H1 (cell line): ENCODE measurements at regions of chr2 and their contacts with region 1.

Region 1: DNA sequence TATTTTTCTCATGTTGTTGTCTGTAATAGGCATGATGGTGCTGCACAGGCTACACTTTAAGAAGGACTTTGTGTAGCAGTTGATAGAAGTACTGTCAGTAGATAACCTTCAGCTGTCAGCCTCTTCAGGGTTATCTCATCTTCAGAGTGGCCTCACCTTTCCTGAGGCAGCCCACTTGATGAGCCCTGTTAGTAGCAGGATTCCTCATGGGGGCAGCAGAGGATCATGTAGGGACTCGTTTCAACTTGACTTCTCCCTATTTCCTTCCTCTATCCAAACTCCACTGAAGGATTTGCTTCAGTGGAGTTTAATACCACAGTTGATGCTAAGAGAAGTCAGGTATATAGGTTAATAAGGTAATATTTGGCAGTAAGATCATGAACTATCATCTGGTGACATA is 530.3 kb upstream of the FSIP2 start:
- DNase-seq: peak; percentile 23 to 65
- H3K4me3 ChIP-seq: no peak overlapping the region
- H3K27ac ChIP-seq: no peak overlapping the region
- H3K4me1 ChIP-seq: no peaks in the 10 kb centered on the region
- H3K27me3 ChIP-seq: no peaks in the 10 kb centered on the region
- CTCF ChIP-seq: peak; percentile 58 to 84 (median 75)
- EP300 ChIP-seq: no peak
- POLR2A ChIP-seq: no peak
- RAD21 ChIP-seq: peak; percentile 96

Region 2: GRCh38 chr2:185279999-185280398 is 71.7 kb after region 1 on chr2:
- CTCF ChIA-PET with region 1: interaction called, 12 read pairs
- POLR2A ChIA-PET with region 1: no interaction called
- DNase-seq: no peak
- H3K4me3 ChIP-seq: no peak overlapping the region
- H3K27ac ChIP-seq: no peak overlapping the region
- H3K4me1 ChIP-seq: no peaks in the 10 kb centered on the region
- H3K27me3 ChIP-seq: no peaks in the 10 kb centered on the region
- CTCF ChIP-seq: peak in 2 of 3 experiments; percentile 18 to 31; a peak in 2 of 4 replicates
- EP300 ChIP-seq: no peak
- POLR2A ChIP-seq: no peak
- RAD21 ChIP-seq: peak in 1 of 2 experiments; percentile 53; a peak in 3 of 4 replicates

Region 3: GRCh38 chr2:185291035-185291647 is 82.9 kb after region 1 on chr2:
- CTCF ChIA-PET with region 1: interaction called, 23 read pairs
- POLR2A ChIA-PET with region 1: no interaction called
- DNase-seq: peak; percentile 54 to 74
- H3K4me3 ChIP-seq: no peak overlapping the region
- H3K27ac ChIP-seq: no peak overlapping the region
- H3K4me1 ChIP-seq: peaks cover 0 to 4% (median under 1%) of the 10 kb centered on the region in 4 experiments; a peak in 2 of 7 replicates
- H3K27me3 ChIP-seq: no peaks in the 10 kb centered on the region
- CTCF ChIP-seq: peak; percentile 82 to 89 (median 86)
- EP300 ChIP-seq: no peak
- POLR2A ChIP-seq: no peak
- RAD21 ChIP-seq: peak; percentile 94 to 96